Activated CD4-positive, alpha-beta T cell treated with anti-CD3 and anti-CD28 coated beads for 36 hours (primary cell): ENCODE measurements at regions of chr2 and their contacts with region 1.

Region 1: DNA sequence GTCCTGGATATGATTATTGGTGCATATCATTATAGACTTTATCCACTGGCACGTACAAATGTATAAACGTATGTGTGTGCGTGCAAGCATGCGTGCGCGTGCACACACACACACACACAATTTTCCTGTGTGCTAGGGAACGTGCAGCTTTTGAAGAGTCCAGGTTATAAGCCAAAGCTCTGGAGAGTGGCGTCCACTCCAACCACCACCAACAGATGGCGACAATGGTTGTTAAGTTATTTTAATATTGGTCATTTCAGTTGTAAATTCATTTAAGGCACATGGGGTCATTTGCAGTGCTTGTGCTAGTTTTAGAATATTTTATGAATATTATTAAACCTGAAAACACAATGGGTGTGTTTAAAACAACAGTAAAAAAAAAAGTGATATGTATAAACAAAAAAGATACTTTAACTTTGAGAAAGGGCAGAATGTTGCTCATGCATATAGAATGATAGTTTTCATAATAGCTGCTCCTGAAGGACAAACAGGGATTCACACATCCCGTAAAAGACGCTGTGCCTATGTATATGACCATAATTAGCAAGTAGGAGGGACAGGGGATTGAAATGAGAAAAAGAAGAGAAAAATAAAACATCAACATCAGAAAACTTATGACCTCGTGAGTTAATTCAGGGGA is 124.2 kb upstream of the ITGB6 start:
- DNase-seq: peak; percentile 71
- ATAC-seq: no peak
- H3K4me3 Mint-ChIP-seq: no peak overlapping the region
- H3K27ac Mint-ChIP-seq: peak overlapping the region; percentile 39
- H3K4me1 Mint-ChIP-seq: peaks cover 85% of the 10 kb centered on the region
- H3K27me3 Mint-ChIP-seq: no peaks in the 10 kb centered on the region

Region 2: DNA sequence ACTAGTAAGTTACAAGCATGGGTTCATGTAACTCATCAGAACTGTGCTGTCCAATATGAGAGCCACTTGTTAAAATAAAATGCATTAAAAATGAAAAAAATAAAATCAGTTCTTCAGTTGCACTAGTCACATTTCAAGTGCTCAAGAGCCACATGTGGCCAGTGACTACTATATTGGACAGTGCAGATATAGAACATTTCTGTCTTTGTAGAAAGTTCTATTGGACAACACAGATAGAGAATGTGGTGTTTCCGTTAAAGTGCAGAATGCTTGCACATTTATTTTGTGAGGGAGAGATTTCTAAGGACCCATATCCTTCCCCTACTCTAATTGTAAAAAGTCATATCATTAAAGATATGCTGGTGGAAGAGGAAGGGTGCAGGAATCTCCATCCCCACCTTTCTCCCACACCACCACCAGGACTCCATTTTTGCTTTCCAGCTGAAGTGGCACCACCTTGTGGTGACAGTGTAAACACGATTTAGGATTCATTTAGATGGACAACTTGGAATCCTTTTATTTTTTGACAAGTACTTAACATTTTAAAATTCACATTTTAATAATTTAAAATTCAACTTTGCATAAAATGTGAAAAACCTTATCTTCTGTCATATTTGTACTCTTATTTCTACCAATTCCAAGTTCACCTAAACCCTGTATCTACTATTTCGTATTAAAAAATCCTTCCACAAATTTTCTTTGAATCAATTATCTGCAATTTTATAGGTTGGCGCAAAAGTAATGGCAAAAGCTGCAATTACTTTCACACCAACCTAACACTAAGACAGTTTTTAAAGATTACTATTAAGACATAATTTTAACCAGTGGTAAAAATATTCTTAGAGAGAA is 516.9 kb before region 1 on chr2:
- CTCF ChIA-PET with region 1: no interaction called
- POLR2A ChIA-PET with region 1: no interaction called
- intact Hi-C with region 1: no loop called
- DNase-seq: peak; percentile 41
- ATAC-seq: no peak
- H3K4me3 Mint-ChIP-seq: no peak overlapping the region
- H3K27ac Mint-ChIP-seq: no peak overlapping the region
- H3K4me1 Mint-ChIP-seq: peaks cover 4% of the 10 kb centered on the region
- H3K27me3 Mint-ChIP-seq: no peaks in the 10 kb centered on the region

Region 3: GRCh38 chr2:160104115-160104514 is 220.2 kb before region 1 on chr2:
- CTCF ChIA-PET with region 1: no interaction called
- POLR2A ChIA-PET with region 1: no interaction called
- intact Hi-C with region 1: no loop called
- DNase-seq: no peak
- ATAC-seq: no peak
- H3K4me3 Mint-ChIP-seq: no peak overlapping the region
- H3K27ac Mint-ChIP-seq: no peak overlapping the region
- H3K4me1 Mint-ChIP-seq: no peaks in the 10 kb centered on the region
- H3K27me3 Mint-ChIP-seq: peaks cover 2% of the 10 kb centered on the region

Region 4: GRCh38 chr2:160269803-160270570 is 54.3 kb before region 1 on chr2:
- CTCF ChIA-PET with region 1: interaction called, 5 read pairs
- POLR2A ChIA-PET with region 1: no interaction called
- intact Hi-C with region 1: loop called (anchors 1 to 2 kb)
- DNase-seq: peak; percentile 80
- ATAC-seq: peak; percentile 59
- H3K4me3 Mint-ChIP-seq: peak overlapping the region; percentile 57
- H3K27ac Mint-ChIP-seq: peak overlapping the region; percentile 52
- H3K4me1 Mint-ChIP-seq: peaks cover 46% of the 10 kb centered on the region
- H3K27me3 Mint-ChIP-seq: no peaks in the 10 kb centered on the region

Region 5: DNA sequence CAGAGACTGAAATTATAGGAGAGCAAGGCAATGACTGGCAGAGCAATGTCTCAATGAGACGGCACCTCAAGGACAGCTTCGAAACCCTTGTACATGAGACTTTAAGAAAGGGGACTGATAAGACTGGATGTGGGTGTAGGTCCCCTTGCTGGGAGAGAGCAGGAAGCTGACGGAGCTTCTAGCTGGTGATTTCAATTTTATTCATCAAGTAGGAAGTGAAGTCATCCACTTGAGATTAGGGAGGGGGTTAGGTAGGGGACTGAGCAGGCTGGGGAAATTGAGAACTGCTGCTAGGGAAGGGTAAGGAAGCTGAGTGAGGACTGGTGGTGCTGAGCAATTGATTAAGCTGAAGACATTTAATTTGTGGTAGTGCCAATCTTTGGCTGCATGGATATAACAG is 24.7 kb before region 1 on chr2:
- CTCF ChIA-PET with region 1: interaction called, 12 read pairs
- POLR2A ChIA-PET with region 1: no interaction called
- intact Hi-C with region 1: loop called (anchors 1 to 2 kb)
- DNase-seq: peak; percentile 48
- ATAC-seq: peak; percentile 59
- H3K4me3 Mint-ChIP-seq: no peak overlapping the region
- H3K27ac Mint-ChIP-seq: peak overlapping the region; percentile 88
- H3K4me1 Mint-ChIP-seq: peaks cover 82% of the 10 kb centered on the region
- H3K27me3 Mint-ChIP-seq: no peaks in the 10 kb centered on the region

Region 6: GRCh38 chr2:160493227-160494028 is 169.1 kb after region 1 on chr2 and contains the start of gene RBMS1:
- CTCF ChIA-PET with region 1: no interaction called
- POLR2A ChIA-PET with region 1: no interaction called
- intact Hi-C with region 1: loop called (anchors 1 to 2 kb)
- DNase-seq: peak; percentile 70
- ATAC-seq: peak; percentile 31
- H3K4me3 Mint-ChIP-seq: peak within 1 kb of the TSS; percentile 91
- H3K27ac Mint-ChIP-seq: peak within 1 kb of the TSS; percentile 65
- H3K4me1 Mint-ChIP-seq: peaks cover 48% of the 10 kb centered on the region
- H3K27me3 Mint-ChIP-seq: peaks cover 2% of the 10 kb centered on the region
- total RNA-seq, gene RBMS1: 39.3 to 47.7 TPM

Region 7: DNA sequence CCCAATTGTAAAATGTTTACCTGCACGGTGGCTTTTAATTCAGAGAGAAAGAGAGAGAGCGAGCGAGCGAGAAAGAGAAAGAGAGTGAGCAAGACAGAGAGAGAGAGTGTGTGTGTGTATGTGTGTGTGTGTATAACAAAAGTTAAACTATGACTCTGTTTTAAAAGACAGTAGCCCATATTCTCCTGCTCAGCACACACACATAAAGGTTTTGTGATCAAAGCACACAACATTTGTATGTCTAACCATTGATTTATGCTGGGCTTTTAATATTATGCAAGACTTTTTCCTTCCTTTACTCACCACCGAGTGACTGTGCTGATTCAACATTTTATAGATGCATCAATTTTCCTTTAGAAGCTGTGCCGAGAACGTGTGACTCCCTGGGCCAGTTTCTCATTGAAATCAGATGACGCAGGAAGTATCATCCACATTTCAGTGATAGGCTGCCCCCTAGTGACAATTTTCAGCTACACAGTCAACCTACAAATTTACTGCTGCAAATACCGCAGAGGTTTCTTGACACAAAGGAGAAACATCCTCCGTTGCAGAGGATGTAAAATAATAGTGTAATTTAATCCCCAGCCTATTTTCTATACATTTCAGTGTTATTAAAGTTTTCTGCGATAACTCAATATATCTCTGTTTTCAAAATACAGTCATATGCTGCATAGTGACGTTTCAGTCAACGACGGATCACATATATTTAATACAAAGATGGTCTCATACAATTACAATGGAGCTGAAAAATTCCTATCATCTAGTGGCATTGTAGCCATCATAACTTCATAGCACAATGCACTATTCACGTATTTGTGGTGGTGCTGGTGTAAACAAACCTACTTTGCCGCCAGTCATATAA is 670.1 kb after region 1 on chr2:
- CTCF ChIA-PET with region 1: interaction called, 17 read pairs
- POLR2A ChIA-PET with region 1: no interaction called
- intact Hi-C with region 1: loop called (anchors 2 to 10 kb)
- DNase-seq: peak; percentile 79
- ATAC-seq: peak; percentile 94
- H3K4me3 Mint-ChIP-seq: no peak overlapping the region
- H3K27ac Mint-ChIP-seq: no peak overlapping the region
- H3K4me1 Mint-ChIP-seq: peaks cover 10% of the 10 kb centered on the region
- H3K27me3 Mint-ChIP-seq: no peaks in the 10 kb centered on the region

Region 8: GRCh38 chr2:161122772-161123530 is 798.7 kb after region 1 on chr2:
- CTCF ChIA-PET with region 1: no interaction called
- POLR2A ChIA-PET with region 1: no interaction called
- intact Hi-C with region 1: no loop called
- DNase-seq: peak; percentile 61
- ATAC-seq: peak; percentile 95
- H3K4me3 Mint-ChIP-seq: no peak overlapping the region
- H3K27ac Mint-ChIP-seq: no peak overlapping the region
- H3K4me1 Mint-ChIP-seq: peaks cover 24% of the 10 kb centered on the region
- H3K27me3 Mint-ChIP-seq: no peaks in the 10 kb centered on the region